IMR-90 (cell line): ENCODE measurements at regions of chr3 and their contacts with region 1.

Region 1: GRCh38 chr3:98901392-98902350 is at the start of gene DCBLD2:
- DNase-seq: peak; percentile 99
- ATAC-seq: peak; percentile 97
- H3K4me3 ChIP-seq: peak within 1 kb of the TSS; percentile 62
- H3K27ac ChIP-seq: peak within 1 kb of the TSS; percentile 94
- H3K4me1 ChIP-seq: peaks cover 2% of the 10 kb centered on the region; the same call in 1 of the 2 replicates
- H3K27me3 ChIP-seq: no peaks in the 10 kb centered on the region
- CTCF ChIP-seq: no peak
- POLR2A ChIP-seq: peak; percentile 93
- RAD21 ChIP-seq: no peak
- total RNA-seq, gene DCBLD2: 196 and 275 TPM in 2 replicates

Region 2: DNA sequence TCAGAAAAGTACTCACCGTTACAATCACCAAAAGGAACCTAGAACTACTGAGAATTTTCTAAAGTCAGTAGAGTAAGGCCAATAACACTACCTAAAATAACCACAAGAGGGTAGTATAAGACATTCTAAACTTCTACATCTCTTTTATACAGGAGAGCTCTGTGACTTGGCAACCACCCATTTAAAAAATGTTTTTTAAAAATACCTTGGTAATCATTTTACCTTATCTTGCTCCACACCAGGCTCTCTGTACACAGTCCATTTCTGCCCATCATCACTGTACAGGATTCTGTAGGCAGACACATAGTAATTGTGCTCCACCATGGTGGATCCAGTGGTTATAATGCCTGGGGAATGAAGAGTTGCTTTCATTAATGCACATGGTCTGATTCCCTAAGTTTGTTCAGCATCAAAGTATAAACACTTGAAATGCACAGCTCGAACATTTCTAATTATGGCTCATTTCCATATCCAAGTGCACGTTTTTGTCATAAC is 84.1 kb before region 1 on chr3:
- CTCF ChIA-PET with region 1: interaction called, 7 read pairs
- POLR2A ChIA-PET with region 1: no interaction called
- dilution Hi-C with region 1: no loop called
- in situ Hi-C with region 1: no loop called
- intact Hi-C with region 1: loop called (anchors 2 kb)
- DNase-seq: peak; percentile 59
- ATAC-seq: peak; percentile 65
- H3K4me3 ChIP-seq: no peak overlapping the region
- H3K27ac ChIP-seq: no peak overlapping the region
- H3K4me1 ChIP-seq: peaks cover 4% of the 10 kb centered on the region
- H3K27me3 ChIP-seq: no peaks in the 10 kb centered on the region
- CTCF ChIP-seq: peak; percentile 69
- POLR2A ChIP-seq: no peak
- RAD21 ChIP-seq: peak; percentile 72

Region 3: DNA sequence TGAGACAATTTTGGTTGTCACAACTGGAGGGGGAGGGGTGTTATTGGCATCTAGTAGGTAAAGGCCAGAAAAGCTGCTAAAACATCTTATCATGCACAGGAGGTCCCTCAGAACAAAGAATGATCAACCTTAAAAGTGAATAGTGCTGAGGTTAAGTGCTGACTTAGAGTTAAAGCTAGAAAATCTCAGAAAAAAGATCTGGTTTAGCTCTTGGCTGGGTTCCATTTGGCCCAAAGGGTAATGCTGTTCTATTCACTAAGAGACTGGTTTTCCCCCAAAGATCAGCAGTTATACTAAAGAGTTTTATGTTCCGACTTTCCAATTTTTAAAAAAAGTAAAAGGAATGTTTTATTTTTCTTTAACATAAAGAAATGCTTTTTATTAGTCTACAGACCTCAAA is 15.8 kb before region 1 on chr3:
- CTCF ChIA-PET with region 1: interaction called, 7 read pairs
- POLR2A ChIA-PET with region 1: interaction called, 3 read pairs
- dilution Hi-C with region 1: no loop called
- in situ Hi-C with region 1: no loop called
- intact Hi-C with region 1: loop called (anchors 2 kb)
- DNase-seq: peak; percentile 39
- ATAC-seq: no peak
- H3K4me3 ChIP-seq: no peak overlapping the region
- H3K27ac ChIP-seq: peak overlapping the region; percentile 22; the same call in 1 of the 2 replicates
- H3K4me1 ChIP-seq: peaks cover 20% of the 10 kb centered on the region
- H3K27me3 ChIP-seq: no peaks in the 10 kb centered on the region
- CTCF ChIP-seq: no peak
- POLR2A ChIP-seq: no peak
- RAD21 ChIP-seq: no peak

Region 4: DNA sequence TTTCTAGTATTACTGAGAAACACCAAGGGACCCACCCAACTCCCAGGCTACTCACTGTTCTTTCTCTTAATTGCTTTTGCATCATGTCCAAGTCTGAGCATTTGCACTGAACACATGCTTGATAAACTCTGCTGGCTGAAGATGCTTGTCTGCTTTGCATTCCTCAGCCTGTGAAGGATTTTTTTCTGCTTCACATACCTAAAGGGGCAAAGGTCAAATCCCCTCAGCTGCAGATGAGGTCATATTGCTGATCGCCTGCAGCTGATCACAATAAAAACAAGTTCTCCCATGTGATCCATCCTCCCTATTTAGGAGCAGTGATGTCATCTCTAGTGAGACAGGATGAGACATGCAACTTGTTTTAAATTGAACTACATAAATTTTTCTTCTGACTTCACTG is 84.4 kb after region 1 on chr3:
- CTCF ChIA-PET with region 1: no interaction called
- POLR2A ChIA-PET with region 1: no interaction called
- dilution Hi-C with region 1: no loop called
- in situ Hi-C with region 1: no loop called
- intact Hi-C with region 1: loop called (anchors 2 kb)
- DNase-seq: peak; percentile 97
- ATAC-seq: peak; percentile 76
- H3K4me3 ChIP-seq: no peak overlapping the region
- H3K27ac ChIP-seq: no peak overlapping the region
- H3K4me1 ChIP-seq: no peaks in the 10 kb centered on the region; the same call in none of the 2 replicates
- H3K27me3 ChIP-seq: no peaks in the 10 kb centered on the region
- CTCF ChIP-seq: no peak
- POLR2A ChIP-seq: no peak
- RAD21 ChIP-seq: no peak

Region 5: DNA sequence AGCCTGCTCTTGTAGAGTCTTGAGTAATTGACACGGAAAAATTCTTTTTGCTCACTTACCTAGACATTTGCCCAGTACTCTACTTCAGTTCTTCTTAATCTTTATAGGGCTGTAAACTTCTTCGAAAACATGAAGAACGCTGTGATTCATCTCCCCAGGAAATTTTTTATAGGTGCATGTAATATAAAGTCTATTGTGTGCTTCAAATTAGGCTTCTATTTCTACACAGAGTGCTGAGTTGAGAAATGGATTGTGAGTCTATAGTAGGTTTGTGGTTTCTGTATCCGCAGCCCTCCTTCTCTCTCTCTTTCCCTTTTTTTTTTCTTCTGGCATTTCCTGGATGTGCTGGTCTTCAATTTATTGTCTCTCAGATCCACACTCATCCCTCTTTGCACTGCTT is 183.2 kb after region 1 on chr3:
- CTCF ChIA-PET with region 1: no interaction called
- POLR2A ChIA-PET with region 1: no interaction called
- dilution Hi-C with region 1: no loop called
- in situ Hi-C with region 1: no loop called
- intact Hi-C with region 1: no loop called
- DNase-seq: no peak
- ATAC-seq: no peak
- H3K4me3 ChIP-seq: no peak overlapping the region
- H3K27ac ChIP-seq: no peak overlapping the region
- H3K4me1 ChIP-seq: no peaks in the 10 kb centered on the region
- H3K27me3 ChIP-seq: peaks cover 3% of the 10 kb centered on the region
- CTCF ChIP-seq: no peak
- POLR2A ChIP-seq: no peak
- RAD21 ChIP-seq: no peak